OCI-LY7 (cell line): ENCODE measurements at regions of chr14 and their contacts with region 1.

Region 1: GRCh38 chr14:61503167-61503801 is 181.9 kb downstream of the PRKCH start:
- DNase-seq: peak; percentile 94
- H3K4me3 ChIP-seq: peak overlapping the region; percentile 52
- H3K27ac ChIP-seq: peak overlapping the region; percentile 99
- H3K4me1 ChIP-seq: peaks cover 99% of the 10 kb centered on the region
- CTCF ChIP-seq: no peak; the same call in 1 of the 2 replicates

Region 2: GRCh38 chr14:61406198-61406597 is 97.1 kb before region 1 on chr14:
- CTCF ChIA-PET with region 1: no interaction called
- POLR2A ChIA-PET with region 1: no interaction called
- intact Hi-C with region 1: no loop called
- DNase-seq: no peak
- H3K4me3 ChIP-seq: no peak overlapping the region
- H3K27ac ChIP-seq: no peak overlapping the region
- H3K4me1 ChIP-seq: no peaks in the 10 kb centered on the region
- CTCF ChIP-seq: no peak

Region 3: DNA sequence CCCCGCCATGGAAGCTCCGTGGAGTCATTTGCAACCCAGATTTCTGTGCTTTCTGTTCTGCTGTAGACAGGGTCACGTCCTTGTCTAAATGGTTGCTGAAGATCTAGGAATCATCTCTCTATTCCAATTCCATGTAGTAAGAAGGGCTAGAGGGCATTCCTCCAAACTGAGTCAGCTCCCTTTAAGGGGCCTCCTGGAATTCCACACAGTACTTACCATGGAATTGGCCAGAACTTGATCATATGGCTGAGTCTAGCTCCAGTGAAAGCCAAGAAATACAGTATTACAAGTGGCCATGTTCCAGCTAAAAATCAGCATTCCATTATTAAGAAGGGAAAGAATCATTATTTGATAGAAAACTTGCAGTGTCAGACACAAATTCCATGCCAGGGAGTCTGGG is 10.0 kb before region 1 on chr14:
- CTCF ChIA-PET with region 1: interaction called, 5 read pairs
- POLR2A ChIA-PET with region 1: interaction called, 49 read pairs
- intact Hi-C with region 1: no loop called
- DNase-seq: no peak
- H3K4me3 ChIP-seq: no peak overlapping the region
- H3K27ac ChIP-seq: no peak overlapping the region
- H3K4me1 ChIP-seq: peaks cover 46% of the 10 kb centered on the region
- CTCF ChIP-seq: no peak

Region 4: DNA sequence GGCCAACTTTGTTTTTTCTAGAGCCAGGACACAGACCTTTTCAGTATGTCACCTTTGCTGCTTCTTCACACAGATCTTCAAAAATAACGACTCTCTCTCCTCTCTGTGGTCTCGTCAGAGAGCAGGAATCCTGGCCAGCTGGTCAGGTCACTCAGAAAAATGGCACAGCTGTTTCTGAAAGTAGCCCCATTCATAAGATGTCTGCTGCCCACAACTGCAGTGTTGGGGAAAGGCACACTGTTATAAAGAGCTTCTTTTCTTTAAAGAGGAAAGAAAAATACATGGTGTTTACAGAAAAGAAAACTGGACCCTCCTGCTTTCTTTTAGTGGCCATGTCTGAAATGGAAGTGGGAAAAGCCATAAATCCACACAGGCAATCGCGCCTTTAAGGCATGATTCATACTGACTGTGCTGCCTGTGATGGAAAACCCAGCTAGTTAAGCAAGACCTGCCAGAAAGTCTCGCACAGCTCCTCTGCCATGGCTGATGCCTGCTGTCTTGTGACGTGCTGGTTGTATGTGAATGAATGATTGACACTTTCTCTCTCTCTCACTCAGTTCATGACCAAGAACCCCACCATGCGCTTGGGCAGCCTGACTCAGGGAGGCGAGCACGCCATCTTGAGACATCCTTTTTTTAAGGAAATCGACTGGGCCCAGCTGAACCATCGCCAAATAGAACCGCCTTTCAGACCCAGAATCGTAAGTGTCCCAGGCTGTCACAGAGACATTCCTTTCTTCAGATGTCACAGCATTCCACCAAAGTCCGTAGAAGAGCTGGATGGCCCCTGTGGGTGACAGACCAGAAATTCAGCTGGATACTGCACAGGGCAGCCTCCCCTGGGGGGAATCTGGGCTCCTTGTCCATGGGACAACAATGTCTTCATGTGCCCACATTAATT is 44.2 kb after region 1 on chr14:
- CTCF ChIA-PET with region 1: interaction called, 3 read pairs
- POLR2A ChIA-PET with region 1: interaction called, 45 read pairs
- intact Hi-C with region 1: no loop called
- DNase-seq: no peak
- H3K4me3 ChIP-seq: no peak overlapping the region
- H3K27ac ChIP-seq: no peak overlapping the region
- H3K4me1 ChIP-seq: peaks cover 25% of the 10 kb centered on the region
- CTCF ChIP-seq: no peak

Region 5: DNA sequence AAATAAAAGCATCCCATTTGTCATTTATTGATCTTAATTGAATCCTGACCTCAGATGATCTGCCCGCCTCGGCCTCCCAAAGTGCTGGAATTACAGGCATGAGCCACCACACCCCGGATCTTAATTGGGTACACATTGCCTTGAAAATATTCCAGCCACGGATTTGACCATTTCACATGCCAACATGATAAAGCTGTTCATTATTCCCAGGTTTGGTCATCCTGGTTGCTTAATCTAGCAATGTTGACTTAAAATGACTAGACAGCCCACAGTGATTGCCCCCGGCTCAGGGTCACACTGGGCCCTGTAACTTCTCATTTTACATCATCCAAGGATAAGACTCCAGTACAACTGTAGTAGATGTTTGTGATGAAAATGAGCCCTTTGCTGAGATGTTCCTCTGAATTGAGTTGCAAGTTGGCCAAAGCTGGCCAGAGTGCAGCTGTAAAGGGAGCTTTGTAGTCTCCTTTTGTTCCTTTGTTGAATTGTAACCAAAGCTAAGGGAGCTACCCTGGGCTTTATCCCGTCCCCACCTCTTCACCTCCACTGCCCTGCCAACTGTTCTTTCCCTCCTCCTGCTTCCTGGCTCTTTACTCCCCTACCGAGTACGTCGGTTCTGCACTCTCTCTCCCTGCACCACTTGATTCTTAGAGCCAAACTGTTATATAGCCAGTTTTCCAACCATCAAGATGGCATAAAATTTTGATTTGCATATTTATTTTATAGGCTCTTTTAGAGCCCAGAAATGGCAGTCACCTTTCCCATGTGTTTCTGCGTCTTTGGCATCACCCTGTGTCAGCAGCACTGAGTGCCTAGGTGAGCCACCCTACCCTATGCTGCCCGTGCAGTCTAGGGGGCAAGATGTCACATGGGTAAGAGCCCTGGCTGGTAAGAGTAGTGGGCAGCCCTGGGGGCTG is 50.7 kb after region 1 on chr14:
- CTCF ChIA-PET with region 1: interaction called, 3 read pairs
- POLR2A ChIA-PET with region 1: interaction called, 45 read pairs
- intact Hi-C with region 1: loop called (anchors 1 kb)
- DNase-seq: no peak
- H3K4me3 ChIP-seq: peak overlapping the region; percentile 6
- H3K27ac ChIP-seq: peak overlapping the region; percentile 83
- H3K4me1 ChIP-seq: peaks cover 54% of the 10 kb centered on the region
- CTCF ChIP-seq: no peak

Region 6: DNA sequence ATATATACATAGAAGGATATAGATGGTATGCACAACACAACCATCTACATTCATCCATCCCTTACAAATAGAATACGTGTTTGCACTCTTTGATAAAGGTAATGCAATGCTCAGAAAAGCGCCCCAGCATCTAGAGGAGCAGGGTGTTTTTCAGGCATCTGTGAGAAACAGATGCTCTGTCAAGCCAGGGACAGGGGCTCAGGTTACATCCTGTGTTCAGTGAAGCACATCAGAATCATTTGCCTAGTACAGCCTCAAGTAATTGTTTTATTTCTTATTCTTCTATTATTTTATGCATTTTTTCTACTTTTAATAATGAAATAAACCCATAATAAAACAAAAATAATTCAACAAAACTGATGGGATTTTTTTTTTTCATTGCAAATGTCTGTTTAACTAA is 141.6 kb after region 1 on chr14:
- CTCF ChIA-PET with region 1: no interaction called
- POLR2A ChIA-PET with region 1: no interaction called
- intact Hi-C with region 1: loop called (anchors 2 kb)
- DNase-seq: peak; percentile 90
- H3K4me3 ChIP-seq: peak overlapping the region; percentile 51
- H3K27ac ChIP-seq: peak overlapping the region; percentile 95
- H3K4me1 ChIP-seq: peaks cover 61% of the 10 kb centered on the region
- CTCF ChIP-seq: no peak

Region 7: GRCh38 chr14:61761959-61762786 is 258.9 kb after region 1 on chr14 and contains the start of gene SNAPC1:
- CTCF ChIA-PET with region 1: interaction called, 3 read pairs
- POLR2A ChIA-PET with region 1: interaction called, 14 read pairs
- intact Hi-C with region 1: no loop called
- DNase-seq: peak; percentile 100
- H3K4me3 ChIP-seq: peak within 1 kb of the TSS; percentile 92
- H3K27ac ChIP-seq: peak within 1 kb of the TSS; percentile 74
- H3K4me1 ChIP-seq: peaks cover 36% of the 10 kb centered on the region
- CTCF ChIP-seq: no peak
- total RNA-seq, gene SNAPC1: 10.5 and 11.7 TPM in 2 replicates